H1 (cell line): ENCODE measurements at regions of chr5 and their contacts with region 1.

Region 1: GRCh38 chr5:170504031-170504596 is 294 bp downstream of the KCNIP1 start:
- DNase-seq: peak in 1 of 2 experiments; percentile 72
- H3K4me3 ChIP-seq: peak overlapping the region; percentile 24 to 63 (median 37)
- H3K27ac ChIP-seq: no peak overlapping the region
- H3K4me1 ChIP-seq: peaks cover 4 to 14% (median 8%) of the 10 kb centered on the region in 4 experiments
- H3K27me3 ChIP-seq: peaks cover 6 to 28% (median 21%) of the 10 kb centered on the region in 4 experiments
- CTCF ChIP-seq: no peak
- EP300 ChIP-seq: no peak
- POLR2A ChIP-seq: no peak
- RAD21 ChIP-seq: no peak

Region 2: DNA sequence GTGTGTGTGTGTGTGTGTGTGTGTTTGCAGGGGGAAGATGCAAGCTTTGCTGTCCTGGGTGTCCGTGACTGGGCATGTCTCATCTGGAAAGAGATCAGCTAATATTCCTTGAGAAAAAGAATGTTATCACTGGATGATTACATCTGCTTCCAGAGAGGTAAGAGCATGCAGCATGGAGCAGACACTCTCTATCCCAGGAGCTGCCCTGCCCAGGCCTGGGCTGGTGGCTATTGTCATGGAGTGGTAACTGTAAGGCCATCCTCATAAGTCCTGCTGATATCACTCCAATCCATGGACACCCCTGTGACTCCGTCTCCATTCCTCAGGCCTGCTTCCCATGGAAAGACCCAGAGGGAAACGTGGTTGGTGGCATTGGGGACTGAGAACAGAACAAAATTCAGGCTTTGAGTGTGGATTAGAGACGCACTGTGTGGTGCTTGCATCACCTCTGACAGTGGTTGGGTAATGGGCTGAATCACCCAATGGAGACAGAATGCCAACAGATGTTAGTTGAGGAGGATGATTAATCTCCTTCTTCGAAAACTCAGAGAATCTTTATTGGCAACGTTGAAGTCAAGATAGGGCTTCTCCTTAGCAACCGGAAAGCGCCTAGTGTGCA is 52.3 kb before region 1 on chr5:
- CTCF ChIA-PET with region 1: no interaction called
- POLR2A ChIA-PET with region 1: no interaction called
- DNase-seq: peak in 1 of 2 experiments; percentile 24
- H3K4me3 ChIP-seq: no peak overlapping the region
- H3K27ac ChIP-seq: no peak overlapping the region
- H3K4me1 ChIP-seq: no peaks in the 10 kb centered on the region; a peak in 1 of 7 replicates
- H3K27me3 ChIP-seq: no peaks in the 10 kb centered on the region
- CTCF ChIP-seq: no peak
- EP300 ChIP-seq: no peak
- POLR2A ChIP-seq: no peak
- RAD21 ChIP-seq: no peak

Region 3: GRCh38 chr5:170483706-170484477 is 20.2 kb before region 1 on chr5:
- CTCF ChIA-PET with region 1: interaction called, 27 read pairs
- POLR2A ChIA-PET with region 1: interaction called, 4 read pairs
- DNase-seq: no peak
- H3K4me3 ChIP-seq: no peak overlapping the region
- H3K27ac ChIP-seq: no peak overlapping the region
- H3K4me1 ChIP-seq: peaks cover 0 to 4% (median 0%) of the 10 kb centered on the region in 4 experiments; a peak in 1 of 7 replicates
- H3K27me3 ChIP-seq: no peaks in the 10 kb centered on the region; a peak in 2 of 7 replicates
- CTCF ChIP-seq: no peak
- EP300 ChIP-seq: no peak
- POLR2A ChIP-seq: no peak
- RAD21 ChIP-seq: no peak

Region 4: DNA sequence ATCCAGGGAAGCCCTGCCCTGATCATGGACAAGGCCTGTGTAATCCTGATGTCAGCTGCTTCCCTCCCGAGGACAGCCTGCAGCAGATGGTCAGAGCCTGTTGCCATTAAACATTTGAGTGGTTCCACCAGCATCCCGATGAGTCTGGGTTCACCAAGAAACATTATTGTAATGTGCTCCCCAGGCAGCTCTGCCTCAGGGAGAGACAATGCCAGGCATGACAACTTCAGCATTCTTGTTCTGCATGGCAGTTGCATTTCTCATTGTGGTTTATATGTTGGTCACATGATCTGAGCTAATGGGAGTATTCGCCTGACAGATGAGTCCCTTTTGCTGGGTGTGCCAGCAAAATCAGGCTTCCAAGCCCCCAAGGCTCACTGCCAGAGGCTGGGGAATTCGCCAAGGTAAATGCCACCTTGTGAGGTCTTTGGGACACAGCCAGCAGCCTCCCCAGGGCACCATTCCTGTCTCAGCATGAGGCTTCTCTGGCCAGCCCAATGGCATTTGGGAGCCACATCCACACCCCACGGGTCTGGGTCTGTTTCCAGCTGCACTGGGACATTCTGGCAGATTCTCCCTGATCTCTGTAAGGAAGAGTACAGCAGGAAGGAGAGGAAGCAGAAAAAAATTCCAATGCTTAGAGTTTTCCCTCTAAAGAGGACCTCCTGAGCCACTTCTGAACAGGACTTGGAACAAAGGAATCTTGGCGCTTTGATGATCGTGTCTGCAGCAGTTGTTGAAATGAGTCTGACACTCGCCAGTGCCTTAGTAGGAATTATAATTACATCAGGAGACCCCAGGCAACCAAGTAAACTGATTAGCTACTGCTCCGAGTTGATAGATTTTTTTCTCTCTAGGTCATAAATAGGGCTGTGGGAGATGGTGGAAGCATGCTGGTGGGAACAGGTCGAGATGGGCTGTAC is 18.4 kb after region 1 on chr5:
- CTCF ChIA-PET with region 1: interaction called, 26 read pairs
- POLR2A ChIA-PET with region 1: no interaction called
- DNase-seq: no peak
- H3K4me3 ChIP-seq: no peak overlapping the region
- H3K27ac ChIP-seq: no peak overlapping the region
- H3K4me1 ChIP-seq: peaks cover 2 to 9% (median 5%) of the 10 kb centered on the region in 4 experiments; a peak in 5 of 7 replicates
- H3K27me3 ChIP-seq: no peaks in the 10 kb centered on the region; a peak in 1 of 7 replicates
- CTCF ChIP-seq: no peak
- EP300 ChIP-seq: no peak
- POLR2A ChIP-seq: no peak
- RAD21 ChIP-seq: no peak

Region 5: GRCh38 chr5:170571281-170571731 is 67.2 kb after region 1 on chr5:
- CTCF ChIA-PET with region 1: interaction called, 12 read pairs
- POLR2A ChIA-PET with region 1: interaction called, 3 read pairs
- DNase-seq: no peak
- H3K4me3 ChIP-seq: no peak overlapping the region
- H3K27ac ChIP-seq: no peak overlapping the region
- H3K4me1 ChIP-seq: peaks cover 0 to 2% (median 0%) of the 10 kb centered on the region in 4 experiments; a peak in 1 of 7 replicates
- H3K27me3 ChIP-seq: no peaks in the 10 kb centered on the region; a peak in 1 of 7 replicates
- CTCF ChIP-seq: peak in 1 of 3 experiments; percentile 16; a peak in 2 of 4 replicates
- EP300 ChIP-seq: no peak
- POLR2A ChIP-seq: no peak
- RAD21 ChIP-seq: peak in 1 of 2 experiments; percentile 32; a peak in 2 of 4 replicates

Region 6: GRCh38 chr5:170623576-170624181 is 119.6 kb after region 1 on chr5:
- CTCF ChIA-PET with region 1: interaction called, 66 read pairs
- POLR2A ChIA-PET with region 1: no interaction called
- DNase-seq: peak in 1 of 2 experiments; percentile 79
- H3K4me3 ChIP-seq: no peak overlapping the region
- H3K27ac ChIP-seq: no peak overlapping the region
- H3K4me1 ChIP-seq: peaks cover 0 to 10% (median 3%) of the 10 kb centered on the region in 4 experiments; a peak in 6 of 7 replicates
- H3K27me3 ChIP-seq: no peaks in the 10 kb centered on the region; a peak in 2 of 7 replicates
- CTCF ChIP-seq: peak in 2 of 3 experiments; percentile 93; a peak in 3 of 4 replicates
- EP300 ChIP-seq: no peak
- POLR2A ChIP-seq: no peak
- RAD21 ChIP-seq: peak; percentile 96 to 98

Region 7: GRCh38 chr5:170633235-170634081 is 129.3 kb after region 1 on chr5:
- CTCF ChIA-PET with region 1: interaction called, 14 read pairs
- POLR2A ChIA-PET with region 1: no interaction called
- DNase-seq: no peak
- H3K4me3 ChIP-seq: peak overlapping the region; percentile 51 to 71 (median 60)
- H3K27ac ChIP-seq: peak overlapping the region; percentile 45
- H3K4me1 ChIP-seq: peaks cover 10 to 21% (median 18%) of the 10 kb centered on the region in 4 experiments
- H3K27me3 ChIP-seq: no peaks in the 10 kb centered on the region
- CTCF ChIP-seq: no peak
- EP300 ChIP-seq: no peak
- POLR2A ChIP-seq: peak in 1 of 2 experiments; percentile 16; a peak in 1 of 3 replicates
- RAD21 ChIP-seq: no peak